ENCODE measurements at regions of chr15 and their contacts with region 1.

Region 1: DNA sequence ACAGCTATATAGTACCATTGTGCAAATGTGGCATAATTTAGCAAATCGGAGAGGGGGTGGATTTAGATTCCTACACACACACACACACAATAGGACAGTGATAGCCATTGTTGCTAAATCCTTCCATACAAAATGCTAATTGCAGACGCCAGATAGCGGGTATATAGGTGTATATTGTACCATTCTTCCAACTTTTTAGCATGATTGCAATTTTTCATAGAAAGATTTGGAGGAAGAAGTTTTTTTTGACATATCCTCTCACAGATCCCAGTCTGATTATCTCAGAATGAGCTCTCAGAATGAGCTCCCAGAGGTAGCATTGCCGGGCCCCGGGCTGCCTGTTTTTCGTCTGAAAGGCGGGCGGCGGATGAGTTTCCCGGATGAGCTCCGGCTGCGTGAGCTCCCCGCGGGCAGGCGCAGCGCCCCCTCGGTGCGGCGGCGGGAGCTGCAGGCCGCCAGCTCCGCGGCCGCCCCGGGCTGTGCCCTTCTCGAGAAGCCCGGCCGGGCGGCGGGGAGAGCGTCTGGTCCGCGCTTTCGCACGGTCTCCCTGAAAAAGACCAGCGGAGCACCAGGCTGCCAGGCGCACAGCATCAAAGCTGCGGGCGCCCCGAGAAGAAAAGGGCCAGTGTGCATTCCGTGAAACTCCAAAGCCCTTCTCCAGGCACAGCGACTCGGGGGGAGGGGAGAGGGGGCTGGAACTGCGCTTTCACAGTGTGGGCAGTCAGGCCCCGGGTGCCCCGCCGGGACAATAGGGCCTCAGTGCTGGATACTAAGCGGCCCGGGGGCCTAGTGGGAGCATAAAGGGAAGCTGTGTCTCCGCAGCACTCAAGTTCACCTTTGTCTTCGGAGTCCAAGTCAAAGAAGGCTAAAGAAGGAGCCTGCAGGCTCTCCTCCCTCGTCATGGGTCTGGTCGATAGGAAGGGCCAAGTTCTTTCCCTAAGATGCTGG is 12.0 kb upstream of the SHC4 start:
- DNase-seq: peak; percentile 51
- ATAC-seq: peak; percentile 96
- H3K4me3 ChIP-seq: peak overlapping the region; percentile 47 to 58
- H3K27ac ChIP-seq: no peak overlapping the region
- H3K4me1 ChIP-seq: peaks cover 5 to 14% of the 10 kb centered on the region in 2 experiments; a peak in 3 of 4 replicates
- H3K27me3 ChIP-seq: no peaks in the 10 kb centered on the region
- CTCF ChIP-seq: peak in 2 of 3 experiments; percentile 70 to 90; a peak in 4 of 6 replicates
- POLR2A ChIP-seq: no peak
- RAD21 ChIP-seq: peak; percentile 29

Region 2: GRCh38 chr15:48877630-48878595 is 97.8 kb before region 1 on chr15 and contains the start of gene EID1:
- CTCF ChIA-PET with region 1: interaction called, 13 read pairs
- POLR2A ChIA-PET with region 1: interaction called, 6 read pairs
- RAD21 ChIA-PET with region 1: interaction called in 1 of 2 experiments, 4 read pairs
- intact Hi-C with region 1: no loop called
- DNase-seq: peak; percentile 85
- ATAC-seq: peak; percentile 96
- H3K4me3 ChIP-seq: peak within 1 kb of the TSS; percentile 91 to 97
- H3K27ac ChIP-seq: peak within 1 kb of the TSS; percentile 69
- H3K4me1 ChIP-seq: peaks cover 3 to 11% of the 10 kb centered on the region in 2 experiments; a peak in 2 of 4 replicates
- H3K27me3 ChIP-seq: no peaks in the 10 kb centered on the region
- CTCF ChIP-seq: no peak
- POLR2A ChIP-seq: peak; percentile 94
- RAD21 ChIP-seq: no peak
- total RNA-seq, gene EID1: 68.6 TPM

Region 3: GRCh38 chr15:48928877-48929538 is 46.7 kb before region 1 on chr15:
- CTCF ChIA-PET with region 1: no interaction called
- POLR2A ChIA-PET with region 1: no interaction called
- RAD21 ChIA-PET with region 1: no interaction called
- intact Hi-C with region 1: no loop called
- DNase-seq: no peak
- ATAC-seq: no peak
- H3K4me3 ChIP-seq: no peak overlapping the region
- H3K27ac ChIP-seq: no peak overlapping the region
- H3K4me1 ChIP-seq: peaks cover 7 to 14% of the 10 kb centered on the region in 2 experiments; a peak in 2 of 4 replicates
- H3K27me3 ChIP-seq: no peaks in the 10 kb centered on the region
- CTCF ChIP-seq: no peak
- POLR2A ChIP-seq: no peak
- RAD21 ChIP-seq: no peak

Region 4: GRCh38 chr15:48963524-48964113 is 12.1 kb before region 1 on chr15 and contains the start of gene SHC4:
- CTCF ChIA-PET with region 1: interaction called, 68 read pairs
- POLR2A ChIA-PET with region 1: interaction called, 15 read pairs
- RAD21 ChIA-PET with region 1: interaction called in 1 of 2 experiments, 4 read pairs
- intact Hi-C with region 1: no loop called
- DNase-seq: no peak
- ATAC-seq: peak; percentile 82
- H3K4me3 ChIP-seq: peak within 1 kb of the TSS; percentile 48 to 60
- H3K27ac ChIP-seq: no peak within 1 kb of the TSS; the same call in 1 of the 2 replicates
- H3K4me1 ChIP-seq: peaks cover 4 to 18% of the 10 kb centered on the region in 2 experiments; a peak in 3 of 4 replicates
- H3K27me3 ChIP-seq: no peaks in the 10 kb centered on the region
- CTCF ChIP-seq: peak; percentile 1 to 25 (median 20); a peak in 2 of 6 replicates
- POLR2A ChIP-seq: no peak
- RAD21 ChIP-seq: no peak; the same call in 1 of the 2 replicates
- total RNA-seq, gene SHC4: 0.44 TPM

Region 5: GRCh38 chr15:48989170-48989569 is 13.4 kb after region 1 on chr15:
- CTCF ChIA-PET with region 1: interaction called, 12 read pairs
- POLR2A ChIA-PET with region 1: interaction called, 4 read pairs
- RAD21 ChIA-PET with region 1: no interaction called
- intact Hi-C with region 1: no loop called
- DNase-seq: no peak
- ATAC-seq: no peak
- H3K4me3 ChIP-seq: no peak overlapping the region
- H3K27ac ChIP-seq: no peak overlapping the region
- H3K4me1 ChIP-seq: no peaks in the 10 kb centered on the region
- H3K27me3 ChIP-seq: no peaks in the 10 kb centered on the region
- CTCF ChIP-seq: no peak
- POLR2A ChIP-seq: no peak
- RAD21 ChIP-seq: no peak

Region 6: GRCh38 chr15:49046220-49047102 is 70.7 kb after region 1 on chr15 and contains the start of gene SECISBP2L:
- CTCF ChIA-PET with region 1: interaction called, 14 read pairs
- POLR2A ChIA-PET with region 1: no interaction called
- RAD21 ChIA-PET with region 1: no interaction called
- intact Hi-C with region 1: no loop called
- DNase-seq: peak; percentile 91
- ATAC-seq: peak; percentile 98
- H3K4me3 ChIP-seq: peak within 1 kb of the TSS; percentile 81 to 86
- H3K27ac ChIP-seq: peak within 1 kb of the TSS; percentile 64
- H3K4me1 ChIP-seq: peaks cover 11 to 17% of the 10 kb centered on the region in 2 experiments; a peak in 3 of 4 replicates
- H3K27me3 ChIP-seq: no peaks in the 10 kb centered on the region
- CTCF ChIP-seq: peak in 2 of 3 experiments; percentile 49 to 66; a peak in 4 of 6 replicates
- POLR2A ChIP-seq: peak; percentile 44
- RAD21 ChIP-seq: peak; percentile 40; the same call in 1 of the 2 replicates
- total RNA-seq, gene SECISBP2L: 22.9 TPM

Region 7: GRCh38 chr15:49145651-49146609 is 170.2 kb after region 1 on chr15:
- CTCF ChIA-PET with region 1: interaction called, 10 read pairs
- POLR2A ChIA-PET with region 1: no interaction called
- RAD21 ChIA-PET with region 1: interaction called in 1 of 2 experiments, 3 read pairs
- intact Hi-C with region 1: no loop called
- DNase-seq: peak; percentile 35
- ATAC-seq: peak; percentile 64
- H3K4me3 ChIP-seq: no peak overlapping the region
- H3K27ac ChIP-seq: no peak overlapping the region
- H3K4me1 ChIP-seq: no peaks in the 10 kb centered on the region
- H3K27me3 ChIP-seq: no peaks in the 10 kb centered on the region
- CTCF ChIP-seq: peak; percentile 37 to 81 (median 65); a peak in 5 of 6 replicates
- POLR2A ChIP-seq: no peak
- RAD21 ChIP-seq: peak; percentile 56

Measured in HCT116 (cell line).